Heart left ventricle (tissue), 16 donors: ENCODE measurements at regions of chr10 and their contacts with region 1.

Region 1: DNA sequence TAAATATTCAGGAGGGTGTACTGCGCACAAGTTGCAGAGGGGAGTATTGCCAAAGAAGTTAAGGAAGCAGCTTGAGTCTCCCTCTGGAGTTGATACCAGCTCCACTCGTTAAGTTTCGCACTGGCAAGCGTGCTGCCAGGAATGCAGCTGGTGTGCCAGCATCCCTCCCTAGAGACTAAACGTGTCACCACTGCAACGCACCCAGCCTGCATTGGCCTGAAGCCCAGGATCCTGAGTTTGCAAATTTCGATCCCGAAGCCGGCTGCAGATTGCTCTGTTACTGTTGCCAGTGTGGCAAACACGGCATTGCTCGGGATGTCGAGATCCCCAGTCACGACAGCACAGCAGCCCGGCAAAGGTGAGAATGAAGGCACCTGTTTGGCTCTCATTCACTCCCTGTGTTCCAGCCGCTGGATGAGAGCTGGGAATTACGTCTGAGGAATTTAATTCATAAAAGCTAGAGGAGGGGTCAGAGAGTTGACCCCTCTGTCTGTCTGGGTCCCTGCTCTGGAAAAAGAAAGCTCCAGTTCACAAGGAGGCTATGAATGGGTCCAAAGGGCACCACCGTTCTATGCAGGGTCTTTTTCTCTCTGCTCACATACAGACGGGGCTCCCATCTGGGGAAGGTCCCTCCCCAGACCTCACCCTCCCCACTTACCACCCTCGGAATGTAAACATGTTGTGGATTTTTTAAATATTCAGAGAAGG is 61.0 kb downstream of the NRP1 start:
- DNase-seq: peak; percentile 87 to 95 (median 88)
- ATAC-seq: peak; percentile 89 to 96 (median 94)
- H3K4me3 ChIP-seq: peak overlapping the region in 10 of 12 donors; percentile 17 to 43 (median 36)
- H3K27ac ChIP-seq: peak overlapping the region; percentile 54 to 93 (median 88)
- H3K4me1 ChIP-seq: peaks cover 16 to 86% (median 68%) of the 10 kb centered on the region in 12 donors
- H3K27me3 ChIP-seq: no peaks in the 10 kb centered on the region
- CTCF ChIP-seq: peak in 4 of 12 donors; percentile 1 to 38 (median 28)
- POLR2A ChIP-seq: peak in 1 of 2 donors; percentile 49

Region 2: GRCh38 chr10:32199724-32200394 is 1073.6 kb before region 1 on chr10:
- intact Hi-C with region 1: no loop called
- DNase-seq: peak in 1 of 5 donors; percentile 28
- ATAC-seq: no peak
- H3K4me3 ChIP-seq: no peak overlapping the region
- H3K27ac ChIP-seq: peak overlapping the region in 1 of 12 donors; percentile 15
- H3K4me1 ChIP-seq: peaks cover 0 to 11% (median 0%) of the 10 kb centered on the region in 12 donors
- H3K27me3 ChIP-seq: no peaks in the 10 kb centered on the region
- CTCF ChIP-seq: no peak
- POLR2A ChIP-seq: no peak

Region 3: GRCh38 chr10:33211106-33211878 is 62.2 kb before region 1 on chr10:
- intact Hi-C with region 1: loop called in 1 of 10 experiments (anchors 10 kb)
- DNase-seq: peak in 4 of 5 donors; percentile 45 to 80 (median 76)
- ATAC-seq: peak; percentile 73 to 85 (median 81)
- H3K4me3 ChIP-seq: no peak overlapping the region
- H3K27ac ChIP-seq: peak overlapping the region in 11 of 12 donors; percentile 2 to 84 (median 56)
- H3K4me1 ChIP-seq: peaks cover 0 to 62% (median 31%) of the 10 kb centered on the region in 12 donors
- H3K27me3 ChIP-seq: no peaks in the 10 kb centered on the region
- CTCF ChIP-seq: no peak
- POLR2A ChIP-seq: no peak

Region 4: DNA sequence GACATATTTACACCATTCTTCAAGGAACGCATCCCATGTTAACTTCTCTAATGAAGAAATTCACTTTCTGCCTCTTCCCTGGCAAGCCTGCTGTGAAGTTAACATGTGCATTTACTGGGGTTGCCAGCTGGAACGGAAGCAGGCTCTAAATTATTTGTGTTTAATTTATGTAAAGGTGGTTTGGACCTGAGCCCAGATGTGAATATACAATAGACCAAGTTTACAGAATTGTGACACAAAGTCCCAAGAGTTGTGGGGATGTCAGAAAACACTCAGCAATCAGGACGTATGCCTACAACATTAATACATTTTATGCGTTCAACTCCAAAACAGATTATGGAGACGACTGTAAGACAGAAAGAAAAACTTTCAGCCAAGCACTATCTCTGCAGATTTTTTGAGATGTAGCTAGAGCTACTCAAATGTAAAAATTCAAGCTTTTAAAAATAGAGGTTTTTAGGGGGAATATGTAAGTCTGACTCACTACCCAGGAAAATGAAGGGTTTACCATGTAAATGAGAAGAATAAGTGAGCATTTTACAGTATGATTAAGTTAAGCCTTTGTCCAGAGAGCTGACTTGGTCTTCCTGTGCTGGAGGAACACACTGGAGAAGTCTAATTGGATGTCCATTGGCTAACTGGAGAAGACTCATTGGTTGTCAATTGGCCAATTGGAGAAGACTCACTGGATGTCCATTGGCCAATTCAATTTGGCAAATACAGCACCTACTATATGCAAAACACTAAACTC is 41.5 kb after region 1 on chr10:
- intact Hi-C with region 1: loop called in 4 of 10 experiments (anchors 5 to 10 kb)
- DNase-seq: no peak
- ATAC-seq: no peak
- H3K4me3 ChIP-seq: no peak overlapping the region
- H3K27ac ChIP-seq: peak overlapping the region in 10 of 12 donors; percentile 8 to 57 (median 32)
- H3K4me1 ChIP-seq: peaks cover 30 to 97% (median 80%) of the 10 kb centered on the region in 12 donors
- H3K27me3 ChIP-seq: no peaks in the 10 kb centered on the region
- CTCF ChIP-seq: no peak
- POLR2A ChIP-seq: no peak

Region 5: GRCh38 chr10:33321513-33321912 is 48.1 kb after region 1 on chr10:
- intact Hi-C with region 1: loop called in 5 of 10 experiments (anchors 5 to 10 kb)
- DNase-seq: no peak
- ATAC-seq: peak in 1 of 4 donors; percentile 14
- H3K4me3 ChIP-seq: no peak overlapping the region
- H3K27ac ChIP-seq: peak overlapping the region in 7 of 12 donors; percentile 15 to 49 (median 27)
- H3K4me1 ChIP-seq: peaks cover 17 to 98% (median 88%) of the 10 kb centered on the region in 12 donors
- H3K27me3 ChIP-seq: no peaks in the 10 kb centered on the region
- CTCF ChIP-seq: no peak
- POLR2A ChIP-seq: no peak

Region 6: GRCh38 chr10:33509231-33509831 is 235.9 kb after region 1 on chr10:
- intact Hi-C with region 1: no loop called
- DNase-seq: peak in 3 of 5 donors; percentile 12 to 52 (median 29)
- ATAC-seq: peak; percentile 47 to 88 (median 80)
- H3K4me3 ChIP-seq: no peak overlapping the region
- H3K27ac ChIP-seq: peak overlapping the region in 1 of 12 donors; percentile 0
- H3K4me1 ChIP-seq: peaks cover 0 to 29% (median 6%) of the 10 kb centered on the region in 12 donors
- H3K27me3 ChIP-seq: no peaks in the 10 kb centered on the region
- CTCF ChIP-seq: no peak
- POLR2A ChIP-seq: no peak